Activated naive CD4-positive, alpha-beta T cell treated with anti-CD3 and anti-CD28 coated beads for 36 hours (primary cell): ENCODE measurements at regions of chr5 and their contacts with region 1.

Region 1: GRCh38 chr5:40679155-40679913 is 381 bp upstream of the PTGER4 start:
- DNase-seq: peak; percentile 95
- H3K4me3 Mint-ChIP-seq: peak overlapping the region; percentile 89
- H3K27ac Mint-ChIP-seq: peak overlapping the region; percentile 99
- H3K4me1 Mint-ChIP-seq: peaks cover 41% of the 10 kb centered on the region
- H3K27me3 Mint-ChIP-seq: no peaks in the 10 kb centered on the region

Region 2: DNA sequence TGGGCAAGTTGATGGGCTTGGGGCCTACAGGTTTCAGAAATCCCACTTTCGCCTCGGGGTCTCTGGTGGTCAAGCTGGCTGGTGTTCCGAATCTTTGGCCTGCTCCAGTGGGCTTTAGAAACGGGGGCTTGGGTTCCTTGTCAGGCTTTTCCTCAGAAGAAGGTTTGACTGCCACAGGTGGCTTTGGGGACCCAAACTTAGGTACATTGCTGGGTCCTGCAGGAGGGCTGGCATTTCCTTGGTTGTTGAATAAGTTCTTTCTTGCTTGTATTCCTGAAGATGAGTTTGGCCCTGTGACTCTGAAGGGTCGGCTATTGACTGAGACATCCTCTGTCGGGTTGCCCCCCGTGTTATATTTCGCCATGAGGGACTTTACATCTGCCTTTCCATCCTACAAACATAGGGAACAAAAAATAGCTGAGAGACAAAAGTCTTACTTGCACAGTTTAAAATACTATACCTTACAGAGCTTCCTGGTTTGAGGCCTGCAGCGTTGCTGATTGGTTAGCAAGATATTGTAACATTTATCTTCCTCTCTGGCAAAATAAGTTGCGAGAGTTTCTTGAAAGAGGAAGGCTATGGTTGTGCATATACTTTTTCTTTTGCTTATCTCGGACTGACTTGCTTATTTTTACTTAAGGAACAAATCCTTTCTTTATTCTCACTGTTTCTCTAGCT is 1476.6 kb before region 1 on chr5:
- CTCF ChIA-PET with region 1: no interaction called
- intact Hi-C with region 1: loop called (anchors 5 kb)
- DNase-seq: peak; percentile 55
- H3K4me3 Mint-ChIP-seq: peak overlapping the region; percentile 83
- H3K27ac Mint-ChIP-seq: peak overlapping the region; percentile 99
- H3K4me1 Mint-ChIP-seq: peaks cover 37% of the 10 kb centered on the region
- H3K27me3 Mint-ChIP-seq: no peaks in the 10 kb centered on the region

Region 3: GRCh38 chr5:40333459-40334244 is 345.7 kb before region 1 on chr5:
- CTCF ChIA-PET with region 1: no interaction called
- intact Hi-C with region 1: loop called (anchors 1 kb)
- DNase-seq: peak; percentile 63
- H3K4me3 Mint-ChIP-seq: no peak overlapping the region
- H3K27ac Mint-ChIP-seq: peak overlapping the region; percentile 41
- H3K4me1 Mint-ChIP-seq: peaks cover 15% of the 10 kb centered on the region
- H3K27me3 Mint-ChIP-seq: peaks cover 3% of the 10 kb centered on the region

Region 4: GRCh38 chr5:40410231-40410861 is 269.0 kb before region 1 on chr5:
- CTCF ChIA-PET with region 1: interaction called, 3 read pairs
- intact Hi-C with region 1: loop called (anchors 1 kb)
- DNase-seq: peak; percentile 88
- H3K4me3 Mint-ChIP-seq: peak overlapping the region; percentile 58
- H3K27ac Mint-ChIP-seq: peak overlapping the region; percentile 98
- H3K4me1 Mint-ChIP-seq: peaks cover 64% of the 10 kb centered on the region
- H3K27me3 Mint-ChIP-seq: no peaks in the 10 kb centered on the region

Region 5: DNA sequence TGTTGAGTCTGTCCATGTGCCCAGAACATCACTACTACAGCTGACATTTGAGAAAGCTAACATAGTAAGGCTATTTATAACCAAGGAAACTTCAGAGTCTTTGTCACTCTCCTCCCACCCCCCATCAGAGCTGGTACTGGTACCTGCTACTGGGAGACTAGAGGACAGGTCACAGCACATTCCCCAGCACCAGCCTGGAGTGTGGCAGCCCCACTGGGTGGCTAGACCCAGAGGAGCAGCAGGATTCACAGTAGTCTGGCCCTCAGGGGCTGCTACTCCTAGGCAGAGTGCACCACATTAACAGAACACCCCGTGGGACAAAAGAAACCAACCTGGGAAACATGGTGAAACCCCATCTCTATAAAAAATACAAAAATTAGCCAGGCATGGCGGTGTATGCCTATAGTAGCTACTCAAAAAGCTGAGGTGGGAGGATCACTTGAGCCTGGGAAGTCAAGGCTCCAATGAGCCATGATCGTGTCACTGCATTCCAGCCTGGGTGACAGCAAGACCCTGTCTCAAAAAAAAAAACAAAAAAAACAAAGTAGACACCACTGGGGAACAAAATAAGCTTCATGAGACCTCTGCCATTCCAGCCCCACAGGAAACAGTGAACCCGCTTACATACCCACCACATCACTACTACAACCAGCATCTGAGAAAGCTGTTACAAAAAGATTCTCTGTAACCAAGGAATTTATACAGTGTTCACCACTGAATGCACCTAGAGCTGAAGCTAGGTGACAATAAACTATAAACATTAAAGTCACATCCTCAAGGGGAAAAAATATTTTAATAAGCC is 25.9 kb before region 1 on chr5:
- CTCF ChIA-PET with region 1: interaction called, 9 read pairs
- intact Hi-C with region 1: loop called (anchors 1 kb)
- DNase-seq: peak; percentile 22
- H3K4me3 Mint-ChIP-seq: peak overlapping the region; percentile 54
- H3K27ac Mint-ChIP-seq: peak overlapping the region; percentile 67
- H3K4me1 Mint-ChIP-seq: peaks cover 57% of the 10 kb centered on the region
- H3K27me3 Mint-ChIP-seq: no peaks in the 10 kb centered on the region

Region 6: DNA sequence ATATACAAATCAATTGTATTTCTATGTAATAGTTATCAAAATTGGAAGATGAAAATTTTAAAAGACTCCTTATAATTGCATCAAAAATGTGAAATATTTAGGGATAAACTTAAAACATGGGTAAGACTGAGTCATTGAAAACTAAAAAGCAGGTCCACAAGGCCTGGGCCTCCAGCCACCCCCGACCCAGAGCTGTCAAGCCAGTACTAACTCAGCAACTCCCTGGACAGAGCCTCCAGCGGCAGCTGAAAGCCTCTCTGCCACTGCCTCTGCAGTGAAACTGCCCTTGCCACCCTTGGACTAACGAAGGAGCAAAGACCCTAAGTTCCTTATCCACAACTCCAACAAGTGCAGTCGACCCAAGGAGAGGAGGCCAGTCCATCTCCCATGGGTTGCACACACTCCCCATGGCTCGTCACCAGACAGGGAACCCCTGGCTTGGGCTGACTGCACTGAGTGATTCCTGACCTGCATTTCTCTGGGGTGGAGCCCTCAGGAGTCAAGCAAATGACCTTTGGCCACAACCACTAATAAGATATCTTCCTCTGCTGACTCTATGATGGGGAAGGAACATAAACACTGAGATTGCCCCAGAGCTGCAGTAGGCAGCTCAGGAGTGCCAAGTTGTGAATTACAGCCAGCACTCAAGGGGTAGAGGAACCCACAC is 20.9 kb after region 1 on chr5:
- CTCF ChIA-PET with region 1: no interaction called
- intact Hi-C with region 1: no loop called
- DNase-seq: no peak
- H3K4me3 Mint-ChIP-seq: no peak overlapping the region
- H3K27ac Mint-ChIP-seq: no peak overlapping the region
- H3K4me1 Mint-ChIP-seq: no peaks in the 10 kb centered on the region
- H3K27me3 Mint-ChIP-seq: no peaks in the 10 kb centered on the region

Region 7: DNA sequence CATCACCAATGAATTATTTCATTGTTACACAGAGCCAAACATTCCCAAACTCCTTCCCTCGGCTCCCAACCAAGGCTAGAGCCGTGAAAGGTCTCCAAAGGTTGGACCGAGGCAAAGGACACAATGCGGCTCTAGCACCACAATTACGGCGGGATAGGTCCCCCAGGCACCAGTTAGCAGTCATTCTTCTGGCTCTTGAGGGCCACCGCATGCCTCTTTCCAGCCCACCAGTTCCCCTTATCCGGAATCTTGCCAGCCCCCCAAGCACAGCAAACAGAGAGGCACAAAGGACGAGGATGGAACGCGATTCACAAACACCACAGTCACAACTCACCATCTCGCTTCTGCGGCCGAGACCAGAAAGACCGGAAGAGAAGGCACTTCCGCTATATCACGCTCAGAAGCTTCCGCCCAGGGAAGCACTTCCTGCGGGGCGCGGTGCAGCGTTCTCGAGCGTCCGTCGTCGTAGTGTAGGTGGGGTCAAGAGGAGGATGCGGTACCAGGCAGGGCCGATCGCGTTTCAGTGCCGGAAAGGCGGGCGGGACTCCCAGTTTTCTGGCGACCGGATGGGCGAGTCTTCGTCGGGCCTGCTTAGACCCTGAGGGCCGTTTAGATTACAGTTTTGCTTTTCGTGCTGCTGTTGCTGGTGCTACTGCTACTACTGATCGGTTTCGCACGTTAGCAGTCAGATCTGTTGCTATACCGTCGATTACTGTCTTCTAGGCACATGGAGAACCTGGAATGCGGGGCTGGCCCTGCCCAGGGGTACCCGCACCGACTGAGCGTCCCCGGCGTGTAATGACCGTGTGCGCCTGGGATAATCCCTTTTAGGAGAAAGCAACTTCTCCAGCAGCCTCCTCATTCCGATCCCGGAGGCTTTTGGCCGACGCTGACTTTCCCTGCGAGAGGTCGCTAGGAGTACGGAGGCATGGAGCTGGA is 155.8 kb after region 1 on chr5 and contains the start of gene RPL37:
- CTCF ChIA-PET with region 1: no interaction called
- intact Hi-C with region 1: loop called (anchors 2 kb)
- DNase-seq: peak; percentile 96
- H3K4me3 Mint-ChIP-seq: peak within 1 kb of the TSS; percentile 100
- H3K27ac Mint-ChIP-seq: peak within 1 kb of the TSS; percentile 100
- H3K4me1 Mint-ChIP-seq: peaks cover 48% of the 10 kb centered on the region
- H3K27me3 Mint-ChIP-seq: no peaks in the 10 kb centered on the region
- total RNA-seq, gene RPL37: 2,148 to 2,239 TPM

Region 8: GRCh38 chr5:40995801-40996586 is 316.7 kb after region 1 on chr5:
- CTCF ChIA-PET with region 1: no interaction called
- intact Hi-C with region 1: no loop called
- DNase-seq: no peak
- H3K4me3 Mint-ChIP-seq: no peak overlapping the region
- H3K27ac Mint-ChIP-seq: no peak overlapping the region
- H3K4me1 Mint-ChIP-seq: no peaks in the 10 kb centered on the region
- H3K27me3 Mint-ChIP-seq: peaks cover 2% of the 10 kb centered on the region